Endothelial cell of umbilical vein (primary cell): ENCODE measurements at regions of chr6 and their contacts with region 1.

Region 1: DNA sequence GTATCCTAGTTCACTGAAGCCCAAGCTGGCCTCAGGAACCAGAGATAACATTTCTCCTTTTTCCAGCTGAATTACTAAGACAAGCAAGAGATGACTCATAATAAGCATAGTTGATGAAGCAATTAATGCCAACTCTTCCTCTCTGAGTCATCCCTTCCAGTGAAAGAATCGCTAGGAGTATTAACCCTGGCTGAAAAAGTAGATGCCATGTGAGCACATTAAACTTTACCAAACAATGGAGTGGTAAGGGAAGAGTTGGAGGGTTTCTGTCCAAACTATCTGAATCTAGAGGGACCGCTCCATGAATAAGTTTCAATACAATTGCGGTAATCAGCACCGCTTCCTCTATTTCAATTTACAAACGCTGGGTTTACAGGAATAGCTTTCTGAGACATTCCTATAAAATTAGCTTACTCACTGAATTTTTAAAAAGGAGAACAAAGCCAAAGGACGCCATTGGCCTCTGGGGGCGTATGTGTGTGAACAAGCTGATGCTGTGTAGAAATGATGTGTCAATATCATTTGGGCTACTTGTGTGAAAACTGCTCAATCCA is 48.3 kb downstream of the ATXN1 start:
- DNase-seq: peak; percentile 94
- H3K4me3 ChIP-seq: peak overlapping the region in 2 of 3 experiments; percentile 8 to 29
- H3K27ac ChIP-seq: peak overlapping the region; percentile 92
- H3K4me1 ChIP-seq: peaks cover 31% of the 10 kb centered on the region
- H3K27me3 ChIP-seq: no peaks in the 10 kb centered on the region
- CTCF ChIP-seq: peak; percentile 35 to 51
- POLR2A ChIP-seq: no peak

Region 2: GRCh38 chr6:16514249-16514648 is 198.8 kb before region 1 on chr6:
- CTCF ChIA-PET with region 1: interaction called, 10 read pairs
- POLR2A ChIA-PET with region 1: no interaction called
- dilution Hi-C with region 1: no loop called
- intact Hi-C with region 1: loop called (anchors 5 kb)
- DNase-seq: peak; percentile 60
- H3K4me3 ChIP-seq: no peak overlapping the region
- H3K27ac ChIP-seq: no peak overlapping the region
- H3K4me1 ChIP-seq: peaks cover 6% of the 10 kb centered on the region
- H3K27me3 ChIP-seq: no peaks in the 10 kb centered on the region
- CTCF ChIP-seq: peak; percentile 36 to 55
- POLR2A ChIP-seq: no peak

Region 3: DNA sequence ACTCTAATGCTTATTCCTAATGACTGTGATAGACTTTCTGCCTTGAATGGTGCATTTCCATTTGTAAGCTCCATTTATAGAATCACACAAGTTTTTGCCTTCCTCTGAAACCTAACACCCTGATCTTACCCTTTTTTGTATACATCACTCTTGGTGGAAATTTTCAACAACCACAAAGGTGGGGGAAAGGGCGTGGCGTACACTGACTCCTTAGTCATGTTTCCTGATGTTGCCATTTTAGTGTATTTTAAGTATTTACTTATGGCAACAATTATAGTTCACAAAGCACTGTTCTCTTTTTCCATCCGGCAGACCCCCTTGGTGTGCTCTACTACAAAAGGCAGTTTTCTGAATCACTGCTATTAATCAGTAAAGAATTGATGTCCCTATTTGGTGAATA is 43.8 kb before region 1 on chr6:
- CTCF ChIA-PET with region 1: interaction called, 3 read pairs
- POLR2A ChIA-PET with region 1: no interaction called
- dilution Hi-C with region 1: no loop called
- intact Hi-C with region 1: loop called (anchors 1 kb)
- DNase-seq: peak; percentile 94
- H3K4me3 ChIP-seq: no peak overlapping the region
- H3K27ac ChIP-seq: peak overlapping the region; percentile 69
- H3K4me1 ChIP-seq: peaks cover 17% of the 10 kb centered on the region
- H3K27me3 ChIP-seq: no peaks in the 10 kb centered on the region
- CTCF ChIP-seq: no peak
- POLR2A ChIP-seq: no peak

Region 4: DNA sequence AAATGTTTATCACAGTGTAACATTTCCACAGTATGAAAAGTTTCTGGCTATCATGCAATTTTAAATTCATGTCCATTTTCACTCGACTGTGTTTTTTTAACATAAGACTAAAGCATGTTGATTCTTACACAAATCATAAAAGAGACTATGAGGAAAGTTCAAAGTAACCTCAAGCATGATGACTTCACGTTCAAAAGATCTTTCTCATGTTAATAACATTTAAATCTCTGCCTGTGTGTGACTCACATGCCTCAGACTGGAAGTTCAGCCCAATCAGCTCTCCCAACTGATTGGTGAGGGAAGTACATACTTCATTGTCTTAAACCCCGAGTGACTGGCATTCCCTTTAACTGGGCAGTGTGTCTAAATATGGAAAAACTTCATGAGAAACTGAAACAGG is 10.8 kb after region 1 on chr6:
- CTCF ChIA-PET with region 1: interaction called, 28 read pairs
- POLR2A ChIA-PET with region 1: interaction called, 10 read pairs
- dilution Hi-C with region 1: no loop called
- intact Hi-C with region 1: loop called (anchors 1 kb)
- DNase-seq: peak; percentile 93
- H3K4me3 ChIP-seq: no peak overlapping the region
- H3K27ac ChIP-seq: peak overlapping the region; percentile 83
- H3K4me1 ChIP-seq: peaks cover 64% of the 10 kb centered on the region
- H3K27me3 ChIP-seq: no peaks in the 10 kb centered on the region
- CTCF ChIP-seq: no peak
- POLR2A ChIP-seq: no peak

Region 5: DNA sequence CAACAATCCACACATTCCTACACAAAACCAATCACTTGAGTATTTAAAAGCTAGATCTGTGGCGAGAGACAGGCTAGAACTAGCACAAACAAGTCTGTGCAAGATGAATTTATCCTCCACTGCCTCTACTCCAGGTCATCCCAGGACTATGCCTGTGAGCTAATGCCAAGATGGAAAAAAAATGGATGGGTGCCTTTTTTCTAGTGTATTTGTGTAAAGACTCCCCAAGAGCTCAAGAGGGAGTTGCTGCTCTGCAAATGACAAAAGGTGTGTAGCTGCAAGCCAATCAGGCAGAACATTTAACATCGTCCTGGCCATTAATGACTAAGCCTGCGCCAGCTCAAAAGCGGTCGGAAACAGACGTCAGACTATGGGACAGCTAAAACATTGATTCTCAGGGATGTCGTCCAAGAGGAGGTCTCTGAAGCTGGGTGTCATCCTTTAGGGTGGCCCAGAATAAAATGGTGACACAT is 26.4 kb after region 1 on chr6:
- CTCF ChIA-PET with region 1: interaction called, 12 read pairs
- POLR2A ChIA-PET with region 1: no interaction called
- dilution Hi-C with region 1: no loop called
- intact Hi-C with region 1: no loop called
- DNase-seq: no peak
- H3K4me3 ChIP-seq: no peak overlapping the region
- H3K27ac ChIP-seq: no peak overlapping the region
- H3K4me1 ChIP-seq: peaks cover 29% of the 10 kb centered on the region
- H3K27me3 ChIP-seq: no peaks in the 10 kb centered on the region
- CTCF ChIP-seq: no peak
- POLR2A ChIP-seq: no peak